ENCODE measurements at regions of chr3 and their contacts with region 1.

Region 1: DNA sequence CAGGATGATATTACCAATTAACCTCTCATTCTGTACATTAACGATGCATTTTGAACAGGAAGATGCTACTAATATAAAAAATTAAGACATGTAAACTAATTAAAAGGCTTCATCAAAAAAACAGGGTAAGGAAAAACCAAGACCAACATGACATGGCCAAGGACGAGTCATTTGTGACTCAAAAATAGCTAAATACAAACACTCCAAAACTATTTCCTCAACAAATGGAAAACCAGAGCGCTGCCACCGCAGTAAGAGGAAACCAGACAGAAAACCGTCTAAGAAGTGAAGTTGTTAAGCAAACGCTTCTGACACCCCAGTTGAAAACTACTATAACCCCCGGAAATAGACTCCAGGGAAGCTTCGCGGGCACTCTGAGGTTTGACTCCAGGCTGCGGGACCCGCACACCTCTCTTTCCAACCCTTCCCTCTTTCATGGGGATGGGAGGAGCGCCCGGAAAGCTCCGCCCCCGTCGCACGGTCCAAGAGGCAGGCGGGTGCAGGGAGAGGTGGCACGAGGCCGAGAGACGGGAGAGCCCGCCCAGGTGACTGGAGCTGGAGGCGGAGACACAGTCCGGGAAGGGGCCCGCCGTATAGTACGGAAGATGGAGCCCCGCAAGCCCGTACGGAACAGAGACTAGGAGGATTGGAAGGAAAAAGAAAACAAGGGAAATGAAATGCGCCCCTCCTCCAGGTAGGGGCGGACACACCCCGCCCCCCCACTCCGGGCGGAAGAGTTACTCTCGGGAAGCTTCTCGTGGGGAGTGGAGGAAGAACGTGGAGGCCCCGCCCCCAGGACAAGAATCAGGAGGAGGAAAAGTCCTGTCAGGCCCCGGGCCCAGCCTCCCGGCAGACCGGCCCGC is 708 bp downstream of the DCAF1 start:
- DNase-seq: peak; percentile 97
- H3K4me3 ChIP-seq: peak overlapping the region; percentile 74 to 98 (median 95)
- H3K27ac ChIP-seq: peak overlapping the region; percentile 99 to 100 (median 100)
- H3K4me1 ChIP-seq: peaks cover 8 to 30% (median 18%) of the 10 kb centered on the region in 4 donors
- H3K27me3 ChIP-seq: no peaks in the 10 kb centered on the region
- CTCF ChIP-seq: no peak
- EP300 ChIP-seq: no peak
- POLR2A ChIP-seq: peak; percentile 60

Region 2: DNA sequence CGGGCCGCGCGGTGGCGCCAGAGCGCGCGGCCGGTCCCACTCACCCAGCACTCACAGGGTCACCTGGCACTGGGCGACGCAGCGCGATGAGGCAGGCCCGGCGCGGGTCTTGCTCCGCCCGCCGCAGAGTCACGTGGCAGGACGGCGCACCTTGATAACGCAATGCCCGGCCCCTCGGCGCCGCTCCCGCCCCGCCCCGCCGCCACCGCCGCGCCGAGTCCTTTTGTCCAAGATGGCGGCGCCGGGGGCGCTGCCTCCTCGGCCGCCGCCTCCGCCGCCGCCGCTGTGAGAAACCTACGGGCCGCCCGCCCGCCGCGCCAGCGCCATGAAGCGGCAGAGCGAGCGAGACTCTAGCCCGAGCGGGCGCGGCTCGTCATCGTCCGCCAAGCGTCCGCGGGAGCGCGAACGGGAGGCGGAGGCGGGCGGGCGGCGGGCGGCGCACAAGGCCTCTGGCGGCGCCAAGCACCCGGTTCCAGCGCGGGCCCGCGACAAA is 108.0 kb before region 1 on chr3 and contains the start of gene RBM15B:
- intact Hi-C with region 1: loop called (anchors 5 kb)
- DNase-seq: peak; percentile 99
- H3K4me3 ChIP-seq: peak within 1 kb of the TSS; percentile 80 to 98 (median 90)
- H3K27ac ChIP-seq: peak within 1 kb of the TSS; percentile 89 to 95 (median 93)
- H3K4me1 ChIP-seq: peaks cover 64 to 93% (median 77%) of the 10 kb centered on the region in 4 donors
- H3K27me3 ChIP-seq: no peaks in the 10 kb centered on the region
- CTCF ChIP-seq: peak; percentile 90 to 93 (median 92)
- EP300 ChIP-seq: no peak
- POLR2A ChIP-seq: peak; percentile 35
- total RNA-seq, gene RBM15B: 27.8 to 50.5 (median 42.6) TPM

Region 3: GRCh38 chr3:51471775-51472652 is 27.1 kb before region 1 on chr3:
- intact Hi-C with region 1: no loop called
- DNase-seq: no peak
- H3K4me3 ChIP-seq: no peak overlapping the region
- H3K27ac ChIP-seq: no peak overlapping the region
- H3K4me1 ChIP-seq: no peaks in the 10 kb centered on the region
- H3K27me3 ChIP-seq: no peaks in the 10 kb centered on the region
- CTCF ChIP-seq: no peak
- EP300 ChIP-seq: no peak
- POLR2A ChIP-seq: no peak

Region 4: GRCh38 chr3:51538459-51539290 is 39.6 kb after region 1 on chr3 and contains the start of gene RAD54L2:
- intact Hi-C with region 1: loop called (anchors 2 kb)
- DNase-seq: no peak
- H3K4me3 ChIP-seq: peak within 1 kb of the TSS; percentile 78 to 99 (median 97)
- H3K27ac ChIP-seq: peak within 1 kb of the TSS; percentile 89 to 96 (median 94)
- H3K4me1 ChIP-seq: peaks cover 21 to 39% (median 35%) of the 10 kb centered on the region in 4 donors
- H3K27me3 ChIP-seq: no peaks in the 10 kb centered on the region
- CTCF ChIP-seq: peak; percentile 37 to 56 (median 41)
- EP300 ChIP-seq: no peak
- POLR2A ChIP-seq: no peak
- total RNA-seq, gene RAD54L2: 18.2 to 25.3 (median 23.8) TPM

Region 5: GRCh38 chr3:51637941-51638471 is 138.9 kb after region 1 on chr3:
- intact Hi-C with region 1: loop called (anchors 1 kb)
- DNase-seq: no peak
- H3K4me3 ChIP-seq: no peak overlapping the region
- H3K27ac ChIP-seq: no peak overlapping the region
- H3K4me1 ChIP-seq: no peaks in the 10 kb centered on the region
- H3K27me3 ChIP-seq: no peaks in the 10 kb centered on the region
- CTCF ChIP-seq: peak; percentile 52 to 71 (median 59)
- EP300 ChIP-seq: no peak
- POLR2A ChIP-seq: no peak

Region 6: DNA sequence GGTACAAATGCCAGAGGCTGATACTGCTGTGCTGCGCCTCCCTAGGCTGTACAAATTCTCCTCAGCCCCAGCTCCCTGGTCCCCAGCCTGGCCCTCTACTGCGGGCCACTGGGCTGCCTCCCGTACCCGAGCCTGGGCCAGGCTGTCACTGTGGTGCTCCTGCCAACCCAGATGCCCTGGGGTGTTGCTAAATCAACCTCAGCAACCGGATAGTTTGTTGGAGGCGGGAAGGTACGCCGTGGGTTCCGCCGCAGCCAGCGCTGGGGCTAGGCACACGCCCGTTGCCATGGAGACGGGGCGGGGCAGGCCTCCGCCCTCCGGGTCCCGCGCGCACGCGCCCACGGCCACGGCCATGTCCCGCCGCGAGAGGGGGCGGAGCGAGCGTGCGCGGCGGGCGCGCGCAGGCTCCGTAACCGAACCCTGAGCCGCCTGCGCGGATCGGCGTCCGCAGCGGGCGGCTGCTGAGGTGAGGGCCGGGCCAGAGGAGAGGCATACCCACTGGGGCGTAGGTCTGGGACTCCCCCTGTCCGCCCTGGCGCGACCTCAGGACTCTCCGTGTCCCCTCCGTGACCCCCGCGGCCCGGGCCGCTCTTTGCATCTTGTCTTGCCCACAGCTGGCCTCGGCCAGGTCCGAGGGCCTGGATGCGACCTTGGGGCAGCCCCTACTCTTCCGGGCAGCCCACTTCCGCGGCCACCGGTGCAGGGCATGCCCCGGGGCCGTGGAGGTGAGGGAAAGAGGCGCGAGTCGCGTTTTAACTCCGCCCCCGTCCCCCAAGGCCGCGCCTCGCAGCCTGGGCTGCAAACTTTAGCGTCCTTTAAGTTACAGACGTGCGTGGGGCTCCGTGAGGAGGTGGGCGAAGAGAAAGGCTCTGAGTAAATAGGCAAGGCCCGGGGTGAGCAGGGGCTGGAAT is 172.0 kb after region 1 on chr3 and contains the start of gene TEX264:
- intact Hi-C with region 1: loop called (anchors 1 kb)
- DNase-seq: peak; percentile 93
- H3K4me3 ChIP-seq: peak within 1 kb of the TSS; percentile 78 to 95 (median 89)
- H3K27ac ChIP-seq: peak within 1 kb of the TSS; percentile 88 to 95 (median 92)
- H3K4me1 ChIP-seq: peaks cover 40 to 67% (median 56%) of the 10 kb centered on the region in 4 donors
- H3K27me3 ChIP-seq: no peaks in the 10 kb centered on the region
- CTCF ChIP-seq: peak in 2 of 3 experiments; percentile 10 to 26
- EP300 ChIP-seq: no peak
- POLR2A ChIP-seq: peak; percentile 66
- total RNA-seq, gene TEX264: 48.0 to 73.8 (median 65.4) TPM

Region 7: DNA sequence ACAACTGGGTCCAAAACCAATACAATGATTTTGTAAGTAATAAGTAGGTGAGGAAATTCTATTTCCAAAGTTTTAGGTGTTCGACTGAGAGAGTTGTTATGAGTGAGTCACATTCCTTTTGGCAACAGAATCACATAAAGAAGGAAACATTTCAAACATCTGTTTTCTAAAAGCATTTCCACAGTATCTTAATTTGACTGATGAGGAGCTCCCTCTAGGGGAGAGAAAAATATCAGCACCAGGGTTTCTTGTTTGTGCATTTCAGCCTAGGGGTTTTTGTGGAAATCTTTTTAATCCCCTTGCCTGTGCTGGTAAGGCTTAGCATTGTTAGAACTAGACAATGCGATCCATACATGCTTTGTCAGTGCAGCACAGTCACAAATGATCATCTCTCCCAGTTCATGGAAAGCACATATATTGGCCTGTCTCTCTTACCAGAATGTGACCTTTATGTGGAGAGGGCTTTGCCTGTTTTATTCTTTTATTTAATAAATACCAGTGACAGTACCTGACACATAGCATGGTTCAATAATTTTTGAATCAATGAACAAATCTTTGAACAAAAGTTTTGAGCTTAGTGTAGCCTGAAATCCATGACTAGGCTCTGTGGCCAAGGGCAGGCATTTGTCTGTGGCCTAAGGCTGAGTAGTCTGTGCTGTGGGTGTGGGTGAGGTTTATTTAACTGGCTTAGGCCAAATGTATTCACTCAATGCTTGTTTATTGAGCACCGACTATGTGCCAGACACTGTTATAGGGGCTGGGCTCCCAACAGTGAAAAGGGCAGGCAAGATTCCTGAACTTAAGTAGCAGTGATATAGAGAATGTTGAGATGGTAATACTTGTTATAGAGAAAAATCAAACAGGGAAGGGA is 301.0 kb after region 1 on chr3:
- intact Hi-C with region 1: loop called (anchors 5 kb)
- DNase-seq: peak; percentile 68
- H3K4me3 ChIP-seq: no peak overlapping the region
- H3K27ac ChIP-seq: no peak overlapping the region
- H3K4me1 ChIP-seq: peaks cover 0 to 3% (median 0%) of the 10 kb centered on the region in 4 donors
- H3K27me3 ChIP-seq: peaks cover 0 to 26% (median 0%) of the 10 kb centered on the region in 4 donors
- CTCF ChIP-seq: peak; percentile 67 to 79 (median 79)
- EP300 ChIP-seq: no peak
- POLR2A ChIP-seq: no peak